ENCODE measurements at regions of chr2 and their contacts with region 1.

Region 1: DNA sequence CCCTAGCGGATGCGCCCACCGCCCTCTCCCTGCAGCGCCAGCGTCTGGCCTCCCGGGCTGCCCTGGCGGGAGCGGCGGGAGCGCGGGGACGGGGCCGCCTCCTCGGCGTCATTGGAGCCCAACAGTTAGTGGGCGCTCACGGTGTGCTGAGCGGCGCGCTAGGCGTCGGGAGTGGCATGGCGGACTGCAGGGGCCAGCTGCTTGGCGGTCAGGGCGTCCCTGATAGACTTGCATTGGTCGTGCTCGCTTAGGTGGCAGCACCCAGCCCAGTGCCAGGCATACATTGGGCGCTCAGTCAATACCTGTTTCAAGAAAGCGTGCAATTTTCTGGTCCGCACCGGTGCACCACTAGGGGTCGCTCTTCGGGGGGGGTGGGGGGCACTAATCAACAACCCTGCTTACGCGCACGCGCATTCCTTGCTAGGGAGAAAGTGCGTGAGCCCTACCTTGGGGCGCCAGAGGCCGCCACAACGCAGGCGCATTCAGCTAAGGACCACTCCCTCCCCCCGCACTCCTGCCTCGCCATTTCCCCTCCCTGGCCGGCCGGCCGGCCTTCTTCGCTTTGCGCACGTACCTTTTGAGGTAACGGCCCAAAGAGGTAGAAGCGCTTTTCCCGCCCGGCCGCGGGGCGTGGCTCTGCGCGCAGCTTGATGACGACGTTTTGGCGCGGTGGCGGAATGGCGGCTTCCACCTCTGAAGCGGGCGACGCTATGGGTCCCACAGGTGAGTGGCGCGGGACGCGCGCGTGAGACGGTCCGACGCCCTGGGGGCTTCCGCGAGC is 411 bp upstream of the MZT2A start:
- DNase-seq: peak; percentile 97
- ATAC-seq: peak; percentile 84
- H3K4me3 Mint-ChIP-seq: peak overlapping the region; percentile 95
- H3K27ac Mint-ChIP-seq: peak overlapping the region; percentile 98
- H3K4me1 Mint-ChIP-seq: peaks cover 63% of the 10 kb centered on the region
- H3K27me3 Mint-ChIP-seq: no peaks in the 10 kb centered on the region

Region 2: GRCh38 chr2:131154071-131154531 is 338.5 kb before region 1 on chr2:
- CTCF ChIA-PET with region 1: interaction called, 13 read pairs
- POLR2A ChIA-PET with region 1: no interaction called
- DNase-seq: peak; percentile 76
- ATAC-seq: peak; percentile 86
- H3K4me3 Mint-ChIP-seq: no peak overlapping the region
- H3K27ac Mint-ChIP-seq: peak overlapping the region; percentile 22
- H3K4me1 Mint-ChIP-seq: peaks cover 29% of the 10 kb centered on the region
- H3K27me3 Mint-ChIP-seq: no peaks in the 10 kb centered on the region

Region 3: GRCh38 chr2:131349021-131349420 is 143.6 kb before region 1 on chr2:
- CTCF ChIA-PET with region 1: no interaction called
- POLR2A ChIA-PET with region 1: no interaction called
- DNase-seq: no peak
- ATAC-seq: no peak
- H3K4me3 Mint-ChIP-seq: no peak overlapping the region
- H3K27ac Mint-ChIP-seq: no peak overlapping the region
- H3K4me1 Mint-ChIP-seq: no peaks in the 10 kb centered on the region
- H3K27me3 Mint-ChIP-seq: peaks cover 9% of the 10 kb centered on the region

Region 4: GRCh38 chr2:131509615-131510014 is 17.0 kb after region 1 on chr2:
- CTCF ChIA-PET with region 1: interaction called, 22 read pairs
- POLR2A ChIA-PET with region 1: interaction called, 17 read pairs
- DNase-seq: no peak
- ATAC-seq: no peak
- H3K4me3 Mint-ChIP-seq: no peak overlapping the region
- H3K27ac Mint-ChIP-seq: no peak overlapping the region
- H3K4me1 Mint-ChIP-seq: peaks cover 32% of the 10 kb centered on the region
- H3K27me3 Mint-ChIP-seq: no peaks in the 10 kb centered on the region

Region 5: GRCh38 chr2:131521961-131522794 is 29.6 kb after region 1 on chr2:
- CTCF ChIA-PET with region 1: interaction called, 21 read pairs
- POLR2A ChIA-PET with region 1: interaction called, 12 read pairs
- DNase-seq: no peak
- ATAC-seq: no peak
- H3K4me3 Mint-ChIP-seq: no peak overlapping the region
- H3K27ac Mint-ChIP-seq: no peak overlapping the region
- H3K4me1 Mint-ChIP-seq: peaks cover 6% of the 10 kb centered on the region
- H3K27me3 Mint-ChIP-seq: no peaks in the 10 kb centered on the region

Region 6: DNA sequence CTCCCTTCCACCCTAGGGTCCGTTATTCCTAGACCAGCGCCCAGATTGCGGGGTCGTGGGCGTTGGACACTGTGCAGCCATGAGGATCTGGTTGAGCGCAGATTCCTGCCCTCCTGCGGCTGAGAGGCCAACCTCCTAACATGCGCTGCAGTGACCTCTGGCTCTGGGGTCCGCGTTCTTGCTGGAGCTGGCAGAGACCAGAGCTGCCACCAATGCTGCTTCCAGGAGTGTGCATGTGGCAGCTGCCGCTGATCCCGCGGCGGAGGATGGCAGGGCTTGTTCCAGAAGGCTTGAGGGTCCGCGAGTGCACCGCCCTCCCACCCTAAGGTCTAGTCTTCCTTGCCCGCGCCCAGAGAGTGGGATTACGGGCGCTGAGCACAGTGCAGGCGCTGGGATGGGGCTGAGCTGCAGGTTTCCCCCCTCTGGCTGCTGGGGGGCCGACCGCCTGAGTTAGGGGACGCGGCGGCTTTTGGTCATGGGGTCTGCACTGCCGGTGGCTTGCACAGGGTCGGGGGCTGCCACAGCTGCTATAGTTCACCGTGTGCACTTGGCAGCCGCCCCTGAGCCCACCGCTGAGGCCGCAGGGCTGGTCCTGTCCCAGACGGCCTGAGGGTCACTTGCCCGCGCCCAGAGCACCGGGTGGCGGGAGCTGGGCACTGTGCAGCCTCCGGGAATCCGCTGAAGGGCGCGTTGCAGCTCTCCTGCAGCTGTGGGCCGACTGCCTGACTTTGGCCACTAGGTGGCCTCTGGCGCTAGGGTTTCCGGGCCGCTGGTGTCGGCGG is 181.0 kb after region 1 on chr2:
- CTCF ChIA-PET with region 1: interaction called, 11 read pairs
- POLR2A ChIA-PET with region 1: no interaction called
- DNase-seq: peak; percentile 76
- ATAC-seq: peak; percentile 80
- H3K4me3 Mint-ChIP-seq: no peak overlapping the region
- H3K27ac Mint-ChIP-seq: no peak overlapping the region
- H3K4me1 Mint-ChIP-seq: peaks cover 4% of the 10 kb centered on the region
- H3K27me3 Mint-ChIP-seq: peaks cover 20% of the 10 kb centered on the region

Measured in activated CD8-positive, alpha-beta T cell treated with anti-CD3 and anti-CD28 coated beads, Interleukin-2, amount 10 ng/mL, durations not matched to agents 7 days and 5 days (primary cell).